B cell (primary cell): ENCODE measurements at regions of chr5 and their contacts with region 1.

Region 1: DNA sequence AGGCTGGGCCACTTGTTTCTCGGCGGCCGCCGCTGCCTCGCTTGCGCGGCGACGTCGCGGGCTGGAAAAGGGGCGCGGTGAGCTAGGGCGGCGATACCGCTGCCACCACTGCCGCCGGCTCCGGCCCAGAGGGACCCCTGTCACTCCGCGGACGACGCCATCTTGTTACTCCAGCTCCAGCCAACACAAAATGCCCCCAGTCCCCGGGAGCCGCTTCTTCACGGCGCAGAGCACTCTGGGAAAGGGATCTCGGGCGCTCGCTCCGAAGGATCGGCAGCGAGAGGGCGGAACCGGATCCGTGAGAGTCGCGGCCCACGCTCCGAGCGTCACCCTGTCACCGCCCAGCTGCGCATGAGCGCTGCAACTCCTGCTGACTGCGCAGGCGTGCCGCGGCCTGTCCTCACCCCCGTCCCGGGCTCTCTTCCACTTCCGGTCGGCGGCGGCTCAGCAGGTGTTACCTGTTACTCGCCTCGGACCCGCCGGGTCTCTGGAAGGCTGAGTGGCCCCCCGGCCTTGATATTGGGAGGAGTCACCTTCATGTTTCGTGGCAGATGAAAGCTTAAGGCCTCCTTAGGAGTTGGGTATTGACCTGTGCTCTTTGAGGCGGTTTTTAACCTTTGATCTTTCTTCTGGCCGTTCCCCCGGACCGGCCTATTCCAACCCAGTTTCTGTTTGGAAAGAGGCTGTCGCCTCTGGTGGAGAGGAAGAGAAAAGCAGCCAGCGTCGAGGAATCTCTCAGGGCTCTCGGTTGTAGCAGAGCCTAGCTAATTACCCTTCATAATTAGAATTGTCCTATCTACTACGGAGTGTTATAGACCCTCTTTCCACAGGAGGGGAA is at the start of gene CSNK1A1:
- DNase-seq: peak; percentile 99
- ATAC-seq: peak; percentile 84
- H3K4me3 ChIP-seq: peak within 1 kb of the TSS; percentile 93 to 99 (median 97)
- H3K4me3 Mint-ChIP-seq: peak within 1 kb of the TSS; percentile 97
- H3K27ac ChIP-seq: peak within 1 kb of the TSS; percentile 87 to 97
- H3K27ac Mint-ChIP-seq: peak within 1 kb of the TSS; percentile 99
- H3K4me1 ChIP-seq: peaks cover 20 to 27% of the 10 kb centered on the region in 2 donors
- H3K4me1 Mint-ChIP-seq: peaks cover 35% of the 10 kb centered on the region
- H3K27me3 ChIP-seq: no peaks in the 10 kb centered on the region
- H3K27me3 Mint-ChIP-seq: no peaks in the 10 kb centered on the region
- CTCF ChIP-seq: peak; percentile 74
- total RNA-seq, gene CSNK1A1: 168 TPM in 2 replicates

Region 2: DNA sequence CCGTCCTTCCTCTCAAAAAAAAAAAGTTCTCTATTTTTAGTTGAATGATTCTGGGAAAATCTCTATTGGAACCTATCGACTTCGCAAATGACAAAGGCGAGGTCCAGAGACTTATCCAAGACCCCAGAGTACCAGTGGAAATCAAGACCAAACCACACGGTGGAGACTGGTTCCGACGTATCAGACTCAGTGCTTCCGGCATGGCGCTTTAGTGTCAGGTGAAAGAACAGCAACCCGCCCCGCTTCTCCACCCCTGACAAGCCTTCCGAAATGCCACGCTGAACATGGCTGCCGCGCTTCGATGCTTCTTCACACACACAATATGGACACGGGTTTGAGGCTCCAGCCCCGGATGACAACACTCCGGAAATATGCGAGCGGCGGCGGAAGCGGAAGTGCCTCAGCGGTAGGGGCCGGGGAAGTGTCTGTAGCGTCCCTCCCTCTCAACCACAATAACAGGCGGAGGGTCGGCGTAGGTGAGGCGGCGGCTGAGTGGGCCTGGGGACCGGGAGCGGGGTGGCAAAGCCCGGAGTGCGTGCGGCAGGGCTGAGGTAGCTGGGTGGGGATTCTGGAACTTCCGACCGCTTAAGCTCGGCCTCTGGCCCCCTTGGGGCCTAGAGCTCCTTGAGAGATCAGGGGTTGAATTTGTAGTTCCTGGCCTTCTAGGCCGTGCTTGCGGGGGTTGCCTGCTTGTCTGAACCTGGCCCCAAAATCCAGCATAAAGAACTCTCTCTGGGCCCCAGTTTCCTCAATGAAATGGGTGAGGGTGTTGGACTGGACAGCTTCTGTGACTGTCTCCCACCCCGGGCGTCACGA is 1167.6 kb before region 1 on chr5 and contains the start of gene FBXO38:
- CTCF ChIA-PET with region 1: no interaction called
- POLR2A ChIA-PET with region 1: interaction called, 4 read pairs
- intact Hi-C with region 1: loop called (anchors 1 kb)
- DNase-seq: peak; percentile 99
- ATAC-seq: peak; percentile 98
- H3K4me3 ChIP-seq: peak within 1 kb of the TSS; percentile 69 to 94 (median 87)
- H3K4me3 Mint-ChIP-seq: peak within 1 kb of the TSS; percentile 88
- H3K27ac ChIP-seq: peak within 1 kb of the TSS; percentile 92 to 96
- H3K27ac Mint-ChIP-seq: peak within 1 kb of the TSS; percentile 92
- H3K4me1 ChIP-seq: peaks cover 24 to 26% of the 10 kb centered on the region in 2 donors
- H3K4me1 Mint-ChIP-seq: peaks cover 51% of the 10 kb centered on the region
- H3K27me3 ChIP-seq: no peaks in the 10 kb centered on the region
- H3K27me3 Mint-ChIP-seq: no peaks in the 10 kb centered on the region
- CTCF ChIP-seq: peak; percentile 24
- total RNA-seq, gene FBXO38: 97.0 and 124 TPM in 2 replicates

Region 3: DNA sequence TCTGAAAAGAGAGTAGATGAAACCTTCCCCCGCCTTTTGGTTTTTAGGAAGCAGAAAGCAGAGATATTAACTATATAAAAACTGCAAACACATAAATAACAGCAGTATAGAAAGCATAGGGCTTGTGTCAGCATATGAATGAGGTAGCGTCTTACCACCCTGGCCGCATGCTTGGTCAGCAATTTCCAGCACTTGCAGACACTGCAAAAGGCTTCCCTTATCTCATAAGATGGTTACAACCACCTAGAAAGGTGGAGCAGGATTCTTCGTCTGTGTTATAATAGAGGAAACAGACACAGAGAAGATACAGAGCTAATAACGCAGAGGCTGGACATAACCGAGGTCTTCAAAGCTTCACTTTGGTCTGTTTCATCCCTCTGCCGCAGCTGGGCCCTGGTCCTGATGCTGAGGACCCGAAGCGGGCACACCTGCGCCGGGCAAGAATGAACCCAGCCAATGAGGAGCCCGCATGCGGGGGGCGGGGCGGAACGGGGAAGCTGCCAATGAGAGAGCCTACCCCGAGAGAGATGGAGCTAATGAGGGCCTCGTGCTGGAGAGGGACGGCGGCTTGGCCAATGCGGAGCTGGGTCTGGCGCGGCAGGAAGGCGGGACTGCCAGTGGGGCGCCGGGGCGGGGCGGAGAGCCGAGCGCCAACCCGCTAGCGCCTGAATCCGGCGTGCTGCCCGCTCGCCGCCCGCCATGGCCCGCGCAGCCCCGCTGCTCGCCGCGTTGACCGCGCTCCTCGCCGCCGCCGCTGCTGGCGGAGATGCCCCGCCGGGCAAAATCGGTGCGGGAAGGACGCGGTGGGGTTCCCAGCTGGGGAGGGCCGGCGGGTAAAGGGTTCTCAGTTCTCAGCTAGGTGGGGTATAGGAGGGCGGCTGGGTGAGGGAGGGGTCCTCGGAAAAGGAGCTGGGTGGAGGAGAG is 193.8 kb before region 1 on chr5 and contains the start of gene PCYOX1L:
- CTCF ChIA-PET with region 1: interaction called, 3 read pairs
- POLR2A ChIA-PET with region 1: interaction called, 3 read pairs
- intact Hi-C with region 1: loop called (anchors 1 kb)
- DNase-seq: peak; percentile 95
- ATAC-seq: peak; percentile 99
- H3K4me3 ChIP-seq: peak within 1 kb of the TSS; percentile 38 to 82 (median 76)
- H3K4me3 Mint-ChIP-seq: peak within 1 kb of the TSS; percentile 95
- H3K27ac ChIP-seq: peak within 1 kb of the TSS; percentile 38 to 69
- H3K27ac Mint-ChIP-seq: peak within 1 kb of the TSS; percentile 85
- H3K4me1 ChIP-seq: peaks cover 12 to 15% of the 10 kb centered on the region in 2 donors
- H3K4me1 Mint-ChIP-seq: peaks cover 18% of the 10 kb centered on the region
- H3K27me3 ChIP-seq: no peaks in the 10 kb centered on the region
- H3K27me3 Mint-ChIP-seq: no peaks in the 10 kb centered on the region
- CTCF ChIP-seq: no peak
- total RNA-seq, gene PCYOX1L: 11.7 and 13.5 TPM in 2 replicates

Region 4: GRCh38 chr5:149572576-149573231 is 21.3 kb after region 1 on chr5:
- CTCF ChIA-PET with region 1: no interaction called
- POLR2A ChIA-PET with region 1: no interaction called
- intact Hi-C with region 1: no loop called
- DNase-seq: no peak
- ATAC-seq: no peak
- H3K4me3 ChIP-seq: no peak overlapping the region
- H3K4me3 Mint-ChIP-seq: no peak overlapping the region
- H3K27ac ChIP-seq: no peak overlapping the region
- H3K27ac Mint-ChIP-seq: no peak overlapping the region
- H3K4me1 ChIP-seq: no peaks in the 10 kb centered on the region
- H3K4me1 Mint-ChIP-seq: no peaks in the 10 kb centered on the region
- H3K27me3 ChIP-seq: no peaks in the 10 kb centered on the region
- H3K27me3 Mint-ChIP-seq: no peaks in the 10 kb centered on the region
- CTCF ChIP-seq: no peak

Region 5: DNA sequence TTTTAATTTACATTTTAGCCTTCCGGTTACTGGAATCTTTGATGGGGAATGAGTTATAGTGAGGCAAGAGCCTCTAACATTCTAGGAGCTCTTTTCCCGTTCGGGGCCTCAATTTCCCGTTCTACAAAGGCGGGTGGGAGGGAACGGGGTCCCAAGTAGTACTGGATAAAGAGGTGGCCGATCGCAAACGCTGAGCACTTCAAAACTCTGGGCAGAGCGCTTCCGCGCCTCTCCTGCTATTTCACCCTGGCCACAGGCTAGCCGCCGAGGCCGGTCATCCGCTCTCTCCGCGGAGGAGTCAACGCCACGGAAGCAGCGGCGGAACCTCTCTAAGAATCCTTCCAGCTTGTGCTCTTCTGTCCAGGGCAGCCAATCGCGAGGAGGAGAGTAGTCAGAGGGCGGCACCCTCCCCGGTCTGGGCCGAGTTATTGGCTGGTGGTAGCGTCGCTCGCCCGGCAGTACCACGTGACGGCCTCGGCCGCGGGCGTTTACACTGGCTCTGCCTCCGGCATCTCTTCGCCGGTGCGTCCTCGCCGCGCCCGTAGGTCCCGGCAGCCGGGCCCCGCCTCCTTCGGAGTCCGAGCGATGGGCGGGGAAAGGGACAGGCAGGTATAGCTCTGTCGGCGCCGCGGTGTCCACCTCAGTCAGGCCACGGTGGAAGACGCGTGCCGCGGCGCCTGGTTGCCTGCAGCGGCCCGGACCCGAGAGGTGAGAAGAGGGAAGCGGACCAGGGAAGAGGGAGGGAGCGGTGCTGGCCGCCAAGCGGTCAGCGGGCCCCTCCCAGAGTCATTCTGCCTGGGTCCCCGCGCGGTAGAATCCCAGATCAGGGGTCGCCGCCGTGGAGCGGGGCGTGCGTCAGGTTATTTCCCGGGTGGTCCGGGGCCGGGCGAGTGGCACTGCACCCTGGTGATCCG is 409.1 kb after region 1 on chr5 and contains the start of gene SLC26A2:
- CTCF ChIA-PET with region 1: no interaction called
- POLR2A ChIA-PET with region 1: no interaction called
- intact Hi-C with region 1: loop called (anchors 1 kb)
- DNase-seq: peak; percentile 95
- ATAC-seq: peak; percentile 97
- H3K4me3 ChIP-seq: peak within 1 kb of the TSS; percentile 54 to 85 (median 79)
- H3K4me3 Mint-ChIP-seq: peak within 1 kb of the TSS; percentile 93
- H3K27ac ChIP-seq: peak within 1 kb of the TSS; percentile 74 to 81
- H3K27ac Mint-ChIP-seq: peak within 1 kb of the TSS; percentile 96
- H3K4me1 ChIP-seq: peaks cover 20% of the 10 kb centered on the region in 2 donors
- H3K4me1 Mint-ChIP-seq: peaks cover 29% of the 10 kb centered on the region
- H3K27me3 ChIP-seq: no peaks in the 10 kb centered on the region
- H3K27me3 Mint-ChIP-seq: no peaks in the 10 kb centered on the region
- CTCF ChIP-seq: no peak
- total RNA-seq, gene SLC26A2: 13.2 and 13.5 TPM in 2 replicates

Region 6: DNA sequence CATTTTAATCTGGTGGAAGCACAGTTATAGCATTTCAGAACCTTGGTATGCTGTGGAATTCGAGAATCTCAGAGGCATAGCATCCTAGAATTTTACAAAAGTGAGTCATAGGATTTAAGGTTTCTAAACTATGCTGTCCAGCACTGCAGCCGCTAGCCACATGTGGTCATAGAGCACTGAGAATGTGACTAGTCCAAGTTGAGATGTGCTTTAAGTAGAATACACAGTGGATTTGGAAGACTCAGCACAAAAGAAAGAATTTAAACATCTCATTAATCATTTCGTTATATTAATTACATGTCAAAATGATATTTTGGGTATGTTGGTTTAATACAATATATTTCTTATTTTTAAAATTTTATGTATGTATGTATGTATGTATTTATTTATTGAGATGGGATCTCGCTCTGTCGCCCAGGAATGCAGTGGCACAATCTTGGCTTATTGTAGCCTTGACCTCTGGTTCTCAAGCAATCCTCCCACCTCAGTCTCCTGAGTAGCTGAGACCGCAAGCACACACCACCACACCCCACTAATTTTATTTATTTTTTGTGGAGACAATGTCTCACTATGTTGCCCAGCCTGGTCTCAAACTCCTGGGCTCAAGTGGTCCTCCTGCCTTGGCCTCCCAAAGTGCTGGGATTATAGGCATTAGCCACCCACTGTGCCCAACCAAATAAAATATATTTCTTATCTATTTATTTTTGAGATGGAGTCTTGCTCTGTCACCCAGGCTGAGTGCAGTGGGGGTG is 918.5 kb after region 1 on chr5:
- CTCF ChIA-PET with region 1: no interaction called
- POLR2A ChIA-PET with region 1: no interaction called
- intact Hi-C with region 1: no loop called
- DNase-seq: no peak
- ATAC-seq: no peak
- H3K4me3 ChIP-seq: no peak overlapping the region
- H3K4me3 Mint-ChIP-seq: no peak overlapping the region
- H3K27ac ChIP-seq: no peak overlapping the region
- H3K27ac Mint-ChIP-seq: no peak overlapping the region
- H3K4me1 ChIP-seq: no peaks in the 10 kb centered on the region
- H3K4me1 Mint-ChIP-seq: no peaks in the 10 kb centered on the region
- H3K27me3 ChIP-seq: no peaks in the 10 kb centered on the region
- H3K27me3 Mint-ChIP-seq: no peaks in the 10 kb centered on the region
- CTCF ChIP-seq: no peak

Region 7: DNA sequence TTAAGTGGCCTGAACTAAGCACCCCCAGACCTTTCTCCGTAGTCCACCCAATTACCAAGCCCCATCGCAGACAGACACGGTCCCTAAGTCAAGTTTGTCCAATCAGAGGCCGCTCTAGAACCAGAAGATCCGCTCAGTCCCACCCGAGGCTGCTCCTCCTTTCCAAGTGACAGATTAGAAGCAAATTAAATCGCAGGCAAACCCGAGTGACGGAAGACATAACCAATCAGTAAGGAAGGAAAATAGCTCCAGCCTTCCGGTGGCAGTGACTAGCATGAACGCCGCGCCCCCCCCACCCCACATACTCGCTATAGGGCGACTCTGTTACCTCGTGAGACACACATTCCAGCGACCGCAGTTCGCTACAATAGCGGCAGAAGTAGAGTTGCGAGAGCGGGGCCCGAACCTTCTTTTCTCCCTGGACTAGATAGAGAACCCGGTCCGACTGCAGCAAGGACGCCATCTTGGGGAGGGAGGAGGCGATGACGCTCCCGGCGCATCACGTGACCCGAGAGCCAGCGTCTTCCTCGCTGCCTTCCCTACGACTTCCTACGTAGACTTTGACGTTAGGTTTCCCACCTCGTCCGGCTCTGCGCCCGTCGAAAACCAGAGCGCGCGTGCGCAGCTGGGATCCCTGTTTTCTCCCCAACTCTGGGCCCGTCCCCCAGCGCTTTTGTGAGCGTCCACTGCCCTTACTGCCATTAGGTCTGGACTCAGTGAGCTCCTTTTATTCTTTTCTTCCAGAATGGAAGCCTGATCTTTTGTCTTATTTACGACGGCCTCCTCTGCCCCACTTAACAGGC is 1207.3 kb after region 1 on chr5 and contains the start of gene DCTN4:
- CTCF ChIA-PET with region 1: no interaction called
- POLR2A ChIA-PET with region 1: no interaction called
- intact Hi-C with region 1: loop called (anchors 5 kb)
- DNase-seq: peak; percentile 98
- ATAC-seq: peak; percentile 91
- H3K4me3 ChIP-seq: peak within 1 kb of the TSS; percentile 81 to 95 (median 85)
- H3K4me3 Mint-ChIP-seq: no peak within 1 kb of the TSS
- H3K27ac ChIP-seq: peak within 1 kb of the TSS; percentile 91 to 93
- H3K27ac Mint-ChIP-seq: no peak within 1 kb of the TSS
- H3K4me1 ChIP-seq: peaks cover 15 to 20% of the 10 kb centered on the region in 2 donors
- H3K4me1 Mint-ChIP-seq: peaks cover 23% of the 10 kb centered on the region
- H3K27me3 ChIP-seq: peaks cover 0 to 6% (median 3%) of the 10 kb centered on the region in 4 experiments
- H3K27me3 Mint-ChIP-seq: peaks cover 3% of the 10 kb centered on the region
- CTCF ChIP-seq: no peak
- total RNA-seq, gene DCTN4: 54.4 and 58.4 TPM in 2 replicates